ENCODE measurements at regions of chr2 and their contacts with region 1.

Region 1: GRCh38 chr2:28185891-28186290 is 206.8 kb upstream of the FOSL2 start:
- DNase-seq: peak; percentile 55
- H3K4me3 Mint-ChIP-seq: no peak overlapping the region
- H3K27ac Mint-ChIP-seq: peak overlapping the region; percentile 94
- H3K4me1 Mint-ChIP-seq: peaks cover 16% of the 10 kb centered on the region
- H3K27me3 Mint-ChIP-seq: no peaks in the 10 kb centered on the region
- CTCF ChIP-seq: no peak

Region 2: DNA sequence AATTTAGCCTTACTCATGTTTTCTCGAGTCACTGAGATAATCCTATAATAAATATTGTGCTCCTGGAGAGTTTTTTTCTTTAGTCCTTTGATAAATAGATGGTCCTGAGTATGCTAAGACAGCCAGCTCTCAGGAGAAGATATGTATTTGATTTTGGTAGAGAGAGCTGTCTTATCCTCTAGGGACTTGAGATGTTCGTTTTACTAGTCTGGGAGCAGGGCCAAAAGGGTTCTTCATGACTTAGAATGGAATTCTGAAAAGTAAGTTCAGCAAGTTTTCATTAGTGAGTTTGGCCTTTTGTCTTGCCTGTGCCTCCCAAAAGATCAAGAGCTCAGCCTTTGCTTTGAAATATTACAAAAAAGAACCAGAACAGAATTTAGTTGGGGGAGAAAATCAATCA is 48.7 kb before region 1 on chr2:
- CTCF ChIA-PET with region 1: no interaction called
- POLR2A ChIA-PET with region 1: interaction called, 12 read pairs
- intact Hi-C with region 1: no loop called
- DNase-seq: peak; percentile 70
- H3K4me3 Mint-ChIP-seq: peak overlapping the region; percentile 16
- H3K27ac Mint-ChIP-seq: peak overlapping the region; percentile 57
- H3K4me1 Mint-ChIP-seq: peaks cover 46% of the 10 kb centered on the region
- H3K27me3 Mint-ChIP-seq: no peaks in the 10 kb centered on the region
- CTCF ChIP-seq: no peak

Region 3: DNA sequence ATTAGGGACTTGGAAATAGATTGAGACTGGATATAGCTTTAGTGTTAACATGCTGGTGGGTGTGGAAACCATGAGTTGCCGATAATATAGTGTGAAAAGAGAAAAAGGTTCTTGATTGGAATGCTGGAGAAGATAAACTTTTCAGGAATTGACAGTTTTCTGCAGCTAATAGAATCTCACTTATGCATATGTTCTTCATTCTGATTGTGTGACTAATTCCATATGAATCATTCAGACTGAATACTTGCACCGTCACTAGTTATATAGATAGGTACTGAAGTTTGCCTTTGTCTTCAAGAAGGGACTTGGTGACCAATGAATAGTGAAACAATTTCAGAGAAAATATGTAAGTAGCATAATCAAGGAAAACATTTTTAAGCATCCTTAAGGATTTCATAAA is 18.9 kb before region 1 on chr2:
- CTCF ChIA-PET with region 1: no interaction called
- POLR2A ChIA-PET with region 1: interaction called, 23 read pairs
- intact Hi-C with region 1: no loop called
- DNase-seq: peak; percentile 27
- H3K4me3 Mint-ChIP-seq: no peak overlapping the region
- H3K27ac Mint-ChIP-seq: no peak overlapping the region
- H3K4me1 Mint-ChIP-seq: peaks cover 49% of the 10 kb centered on the region
- H3K27me3 Mint-ChIP-seq: no peaks in the 10 kb centered on the region
- CTCF ChIP-seq: no peak

Region 4: GRCh38 chr2:28201671-28202180 is 15.8 kb after region 1 on chr2:
- CTCF ChIA-PET with region 1: interaction called, 4 read pairs
- POLR2A ChIA-PET with region 1: interaction called, 14 read pairs
- intact Hi-C with region 1: no loop called
- DNase-seq: no peak
- H3K4me3 Mint-ChIP-seq: no peak overlapping the region
- H3K27ac Mint-ChIP-seq: no peak overlapping the region
- H3K4me1 Mint-ChIP-seq: peaks cover 11% of the 10 kb centered on the region
- H3K27me3 Mint-ChIP-seq: no peaks in the 10 kb centered on the region
- CTCF ChIP-seq: no peak

Region 5: DNA sequence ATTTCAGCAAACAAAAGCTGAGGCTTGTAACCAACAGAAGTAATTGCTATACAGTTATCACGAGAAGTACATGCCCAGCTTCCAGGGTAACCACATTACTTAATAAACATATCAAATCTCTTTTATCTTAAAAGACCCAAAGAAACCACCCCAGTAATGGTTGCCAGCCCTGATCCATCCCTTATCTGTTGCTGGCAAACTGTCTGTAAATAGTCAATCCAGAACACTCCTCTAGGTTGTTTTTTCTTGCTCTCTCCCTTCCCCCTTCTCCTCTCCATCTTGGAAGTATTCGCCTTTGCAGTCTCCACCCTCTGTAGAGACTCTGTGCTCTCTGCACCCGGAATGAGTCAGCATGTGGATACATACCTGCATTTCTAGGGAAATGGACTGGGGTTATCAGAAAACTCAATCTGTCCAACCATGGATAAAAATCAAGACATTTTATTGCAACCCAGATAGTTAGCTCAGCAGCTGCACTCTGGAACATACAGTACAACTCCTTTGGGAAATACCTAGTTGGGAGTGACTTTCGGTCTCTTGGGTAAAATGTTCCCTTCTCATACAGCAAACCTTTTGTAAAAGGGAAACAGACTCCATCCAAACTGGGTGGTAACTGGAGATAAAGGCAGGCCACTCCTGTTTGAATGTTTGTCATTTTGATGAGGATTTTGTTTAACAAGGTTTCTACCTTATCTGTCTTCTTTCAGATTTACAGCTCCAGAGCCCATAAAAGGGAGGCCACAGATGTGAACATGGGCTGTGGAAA is 83.3 kb after region 1 on chr2:
- CTCF ChIA-PET with region 1: interaction called, 3 read pairs
- POLR2A ChIA-PET with region 1: interaction called, 29 read pairs
- intact Hi-C with region 1: no loop called
- DNase-seq: peak; percentile 70
- H3K4me3 Mint-ChIP-seq: peak overlapping the region; percentile 60
- H3K27ac Mint-ChIP-seq: peak overlapping the region; percentile 90
- H3K4me1 Mint-ChIP-seq: peaks cover 45% of the 10 kb centered on the region
- H3K27me3 Mint-ChIP-seq: no peaks in the 10 kb centered on the region
- CTCF ChIP-seq: no peak

Measured in MCF 10A (cell line).